ENCODE measurements at regions of chr6 and their contacts with region 1.

Region 1: GRCh38 chr6:151014404-151015100 is 149.1 kb downstream of the MTHFD1L start:
- DNase-seq: peak; percentile 13 to 78 (median 43)
- ATAC-seq: peak; percentile 38 to 75 (median 48)
- H3K4me3 ChIP-seq: no peak overlapping the region
- H3K4me3 Mint-ChIP-seq: no peak overlapping the region
- H3K27ac ChIP-seq: no peak overlapping the region
- H3K27ac Mint-ChIP-seq: no peak overlapping the region
- H3K4me1 ChIP-seq: no peaks in the 10 kb centered on the region
- H3K4me1 Mint-ChIP-seq: peaks cover 0 to 2% (median 2%) of the 10 kb centered on the region in 3 donors
- H3K27me3 ChIP-seq: no peaks in the 10 kb centered on the region
- H3K27me3 Mint-ChIP-seq: no peaks in the 10 kb centered on the region

Region 2: DNA sequence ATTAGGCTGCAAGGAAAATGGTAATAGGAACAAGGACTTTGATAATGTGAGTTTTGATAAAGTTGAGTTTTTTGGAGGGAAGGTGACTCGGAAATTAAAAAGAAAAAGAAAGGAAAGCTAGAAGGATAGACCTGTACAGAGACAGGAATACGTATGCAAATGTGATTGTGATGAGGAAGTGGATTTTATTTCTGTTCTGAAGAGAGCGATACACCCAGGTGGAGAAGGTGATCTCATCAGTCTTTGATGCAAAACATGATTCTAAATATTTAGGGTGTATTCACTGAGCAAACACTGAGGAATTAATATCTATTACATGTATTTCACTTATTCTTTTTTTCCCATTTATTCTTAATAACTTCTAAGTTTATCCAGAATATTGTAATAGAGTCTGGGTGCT is 424.1 kb before region 1 on chr6:
- CTCF ChIA-PET with region 1: no interaction called
- POLR2A ChIA-PET with region 1: no interaction called
- DNase-seq: no peak
- ATAC-seq: no peak
- H3K4me3 ChIP-seq: no peak overlapping the region
- H3K4me3 Mint-ChIP-seq: no peak overlapping the region
- H3K27ac ChIP-seq: no peak overlapping the region
- H3K27ac Mint-ChIP-seq: no peak overlapping the region
- H3K4me1 ChIP-seq: no peaks in the 10 kb centered on the region
- H3K4me1 Mint-ChIP-seq: no peaks in the 10 kb centered on the region
- H3K27me3 ChIP-seq: no peaks in the 10 kb centered on the region
- H3K27me3 Mint-ChIP-seq: peaks cover 8% of the 10 kb centered on the region in 2 donors

Region 3: GRCh38 chr6:151004415-151005024 is 10.0 kb before region 1 on chr6:
- CTCF ChIA-PET with region 1: interaction called, 6 to 14 read pairs
- POLR2A ChIA-PET with region 1: no interaction called
- DNase-seq: no peak
- ATAC-seq: peak in 2 of 4 experiments; percentile 49 to 67
- H3K4me3 ChIP-seq: no peak overlapping the region
- H3K4me3 Mint-ChIP-seq: no peak overlapping the region
- H3K27ac ChIP-seq: no peak overlapping the region
- H3K27ac Mint-ChIP-seq: peak overlapping the region in 1 of 2 donors; percentile 84
- H3K4me1 ChIP-seq: peaks cover 0 to 16% of the 10 kb centered on the region in 2 experiments
- H3K4me1 Mint-ChIP-seq: peaks cover 6 to 36% (median 16%) of the 10 kb centered on the region in 3 donors
- H3K27me3 ChIP-seq: no peaks in the 10 kb centered on the region
- H3K27me3 Mint-ChIP-seq: no peaks in the 10 kb centered on the region

Region 4: GRCh38 chr6:151323791-151324487 is 309.4 kb after region 1 on chr6:
- CTCF ChIA-PET with region 1: interaction called, 26 to 72 read pairs
- POLR2A ChIA-PET with region 1: no interaction called
- DNase-seq: peak; percentile 24 to 82 (median 64)
- ATAC-seq: peak; percentile 65 to 81 (median 80)
- H3K4me3 ChIP-seq: no peak overlapping the region
- H3K4me3 Mint-ChIP-seq: peak overlapping the region in 2 of 3 donors; percentile 28 to 81
- H3K27ac ChIP-seq: no peak overlapping the region
- H3K27ac Mint-ChIP-seq: no peak overlapping the region
- H3K4me1 ChIP-seq: peaks cover 2 to 19% of the 10 kb centered on the region in 2 experiments
- H3K4me1 Mint-ChIP-seq: peaks cover 19 to 28% (median 25%) of the 10 kb centered on the region in 3 donors
- H3K27me3 ChIP-seq: peaks cover 2 to 39% of the 10 kb centered on the region in 2 experiments
- H3K27me3 Mint-ChIP-seq: peaks cover 46 to 56% of the 10 kb centered on the region in 2 donors

Region 5: GRCh38 chr6:151330134-151330696 is 315.7 kb after region 1 on chr6:
- CTCF ChIA-PET with region 1: interaction called, 26 to 72 read pairs
- POLR2A ChIA-PET with region 1: interaction called in 1 of 2 experiments, 8 read pairs
- DNase-seq: no peak
- ATAC-seq: no peak
- H3K4me3 ChIP-seq: no peak overlapping the region
- H3K4me3 Mint-ChIP-seq: no peak overlapping the region
- H3K27ac ChIP-seq: no peak overlapping the region
- H3K27ac Mint-ChIP-seq: no peak overlapping the region
- H3K4me1 ChIP-seq: peaks cover under 1 to 12% of the 10 kb centered on the region in 2 experiments
- H3K4me1 Mint-ChIP-seq: peaks cover 9 to 12% (median 11%) of the 10 kb centered on the region in 3 donors
- H3K27me3 ChIP-seq: peaks cover 2 to 18% of the 10 kb centered on the region in 2 experiments
- H3K27me3 Mint-ChIP-seq: peaks cover 32 to 33% of the 10 kb centered on the region in 2 donors

Region 6: DNA sequence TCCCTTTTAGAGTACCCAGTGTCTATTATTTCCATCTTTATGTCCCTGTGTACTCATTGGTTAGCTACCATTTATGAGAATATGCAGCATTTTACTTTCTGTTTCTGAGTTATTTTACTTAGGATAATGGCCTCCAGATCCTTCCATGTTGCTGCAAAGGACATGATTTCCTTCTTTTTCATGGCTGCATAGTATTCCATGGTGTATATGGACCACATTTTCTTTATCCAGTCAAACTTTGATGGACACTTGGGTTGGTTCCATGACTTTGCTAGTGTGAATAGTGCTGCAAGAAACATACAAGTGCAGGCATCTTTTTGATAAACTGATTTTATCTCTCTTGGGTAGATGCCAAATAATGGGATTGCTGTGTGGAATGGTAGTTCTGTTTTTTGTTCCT is 321.4 kb after region 1 on chr6:
- CTCF ChIA-PET with region 1: interaction called, 22 to 26 read pairs
- POLR2A ChIA-PET with region 1: interaction called in 1 of 2 experiments, 8 read pairs
- DNase-seq: no peak
- ATAC-seq: no peak
- H3K4me3 ChIP-seq: no peak overlapping the region
- H3K4me3 Mint-ChIP-seq: no peak overlapping the region
- H3K27ac ChIP-seq: no peak overlapping the region
- H3K27ac Mint-ChIP-seq: no peak overlapping the region
- H3K4me1 ChIP-seq: peaks cover 0 to 3% of the 10 kb centered on the region in 2 experiments
- H3K4me1 Mint-ChIP-seq: peaks cover 0 to 3% (median 3%) of the 10 kb centered on the region in 3 donors
- H3K27me3 ChIP-seq: peaks cover 0 to 5% of the 10 kb centered on the region in 2 experiments
- H3K27me3 Mint-ChIP-seq: peaks cover 1 to 5% of the 10 kb centered on the region in 2 donors

Measured in T-cell (primary cell).